ENCODE measurements at regions of chr12 and their contacts with region 1.

Region 1: GRCh38 chr12:57005980-57006808 is at the start of gene ZBTB39:
- DNase-seq: no peak
- H3K4me3 ChIP-seq: peak within 1 kb of the TSS; percentile 95 to 98 (median 96)
- H3K27ac ChIP-seq: peak within 1 kb of the TSS; percentile 89 to 91 (median 89)
- H3K4me1 ChIP-seq: peaks cover 16 to 45% (median 39%) of the 10 kb centered on the region in 4 donors
- H3K27me3 ChIP-seq: no peaks in the 10 kb centered on the region
- CTCF ChIP-seq: peak; percentile 54 to 61 (median 57)
- EP300 ChIP-seq: no peak
- POLR2A ChIP-seq: no peak
- total RNA-seq, gene ZBTB39: 5.0 to 9.1 (median 7.1) TPM

Region 2: GRCh38 chr12:56751712-56752598 is 254.2 kb before region 1 on chr12 and contains the start of gene PRIM1:
- intact Hi-C with region 1: loop called (anchors 5 kb)
- DNase-seq: peak; percentile 92
- H3K4me3 ChIP-seq: peak within 1 kb of the TSS; percentile 70 to 79 (median 77)
- H3K27ac ChIP-seq: peak within 1 kb of the TSS; percentile 59 to 74 (median 71)
- H3K4me1 ChIP-seq: peaks cover 7 to 15% (median 11%) of the 10 kb centered on the region in 4 donors
- H3K27me3 ChIP-seq: no peaks in the 10 kb centered on the region
- CTCF ChIP-seq: peak; percentile 25 to 40 (median 32)
- EP300 ChIP-seq: no peak
- POLR2A ChIP-seq: no peak
- total RNA-seq, gene PRIM1: 2.2 to 4.2 (median 3.2) TPM

Region 3: GRCh38 chr12:56785141-56785865 is 220.9 kb before region 1 on chr12:
- intact Hi-C with region 1: no loop called
- DNase-seq: no peak
- H3K4me3 ChIP-seq: no peak overlapping the region
- H3K27ac ChIP-seq: no peak overlapping the region
- H3K4me1 ChIP-seq: no peaks in the 10 kb centered on the region
- H3K27me3 ChIP-seq: no peaks in the 10 kb centered on the region
- CTCF ChIP-seq: no peak
- EP300 ChIP-seq: no peak
- POLR2A ChIP-seq: no peak

Region 4: GRCh38 chr12:57058454-57058853 is 52.3 kb after region 1 on chr12:
- intact Hi-C with region 1: loop called (anchors 5 kb)
- DNase-seq: no peak
- H3K4me3 ChIP-seq: no peak overlapping the region
- H3K27ac ChIP-seq: no peak overlapping the region
- H3K4me1 ChIP-seq: peaks cover 0 to 11% (median 2%) of the 10 kb centered on the region in 4 donors
- H3K27me3 ChIP-seq: no peaks in the 10 kb centered on the region
- CTCF ChIP-seq: no peak
- EP300 ChIP-seq: no peak
- POLR2A ChIP-seq: no peak

Region 5: DNA sequence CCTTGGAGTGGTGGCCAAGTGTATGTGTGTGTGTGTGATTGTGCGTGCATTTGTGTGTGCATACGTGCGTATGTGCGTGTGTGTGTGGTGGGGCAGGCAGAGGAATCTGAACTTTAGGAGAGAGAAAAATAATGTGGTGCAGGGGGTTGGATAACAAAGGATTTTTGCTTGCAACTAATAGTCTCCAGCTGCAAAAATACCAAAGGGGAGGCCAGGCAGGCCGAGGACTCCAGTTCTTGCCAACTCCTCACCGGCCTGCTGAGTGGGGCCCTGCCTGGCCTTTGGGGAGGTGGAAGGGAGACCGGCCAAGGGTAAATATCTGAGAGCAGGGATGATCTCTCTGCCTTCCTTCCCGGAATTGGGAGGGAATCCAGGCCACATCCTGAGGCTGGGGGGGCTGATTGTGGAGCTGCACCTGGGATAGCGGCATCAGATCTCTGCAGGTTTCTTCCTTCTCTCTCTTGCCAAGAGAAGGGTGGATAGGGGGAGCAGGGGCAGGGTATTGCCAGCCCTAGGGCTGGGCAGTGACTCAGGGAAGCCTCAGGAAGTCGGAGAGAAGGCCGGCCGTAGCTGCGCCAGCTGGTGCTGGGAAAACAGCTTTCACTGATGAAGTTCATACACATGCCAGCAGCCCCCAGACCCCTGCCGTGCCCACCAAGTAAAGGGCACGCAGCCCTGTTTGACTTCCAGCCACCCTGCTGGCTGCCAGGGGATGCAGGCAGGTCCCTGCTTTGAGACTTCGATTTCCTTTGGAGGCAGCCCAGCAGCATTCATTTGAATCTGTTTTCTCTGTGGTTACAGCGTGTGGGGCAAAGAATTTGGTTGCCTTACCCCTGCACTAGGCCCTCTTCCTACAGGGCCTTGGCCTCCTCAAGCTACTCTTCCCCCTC is 145.8 kb after region 1 on chr12:
- intact Hi-C with region 1: no loop called
- DNase-seq: no peak
- H3K4me3 ChIP-seq: peak overlapping the region in 2 of 4 donors; percentile 5 to 8
- H3K27ac ChIP-seq: peak overlapping the region; percentile 79 to 89 (median 82)
- H3K4me1 ChIP-seq: peaks cover 61 to 86% (median 80%) of the 10 kb centered on the region in 4 donors
- H3K27me3 ChIP-seq: no peaks in the 10 kb centered on the region
- CTCF ChIP-seq: no peak
- EP300 ChIP-seq: no peak
- POLR2A ChIP-seq: no peak

Region 6: GRCh38 chr12:57205933-57206330 is 199.7 kb after region 1 on chr12:
- intact Hi-C with region 1: no loop called
- DNase-seq: no peak
- H3K4me3 ChIP-seq: no peak overlapping the region
- H3K27ac ChIP-seq: no peak overlapping the region
- H3K4me1 ChIP-seq: peaks cover 0 to 16% (median 4%) of the 10 kb centered on the region in 4 donors
- H3K27me3 ChIP-seq: no peaks in the 10 kb centered on the region
- CTCF ChIP-seq: no peak
- EP300 ChIP-seq: no peak
- POLR2A ChIP-seq: no peak